Caco-2 (cell line): ENCODE measurements at regions of chr3 and their contacts with region 1.

Region 1: GRCh38 chr3:183988216-183988790 is 29.4 kb downstream of the ABCC5 start:
- DNase-seq: peak; percentile 77
- H3K4me3 ChIP-seq: no peak overlapping the region
- H3K4me3 Mint-ChIP-seq: peak overlapping the region; percentile 52
- H3K27ac Mint-ChIP-seq: peak overlapping the region; percentile 72
- H3K4me1 ChIP-seq: peaks cover 40% of the 10 kb centered on the region
- H3K4me1 Mint-ChIP-seq: peaks cover 48% of the 10 kb centered on the region
- H3K27me3 ChIP-seq: no peaks in the 10 kb centered on the region
- H3K27me3 Mint-ChIP-seq: no peaks in the 10 kb centered on the region
- CTCF ChIP-seq: peak in 1 of 2 experiments; percentile 38

Region 2: DNA sequence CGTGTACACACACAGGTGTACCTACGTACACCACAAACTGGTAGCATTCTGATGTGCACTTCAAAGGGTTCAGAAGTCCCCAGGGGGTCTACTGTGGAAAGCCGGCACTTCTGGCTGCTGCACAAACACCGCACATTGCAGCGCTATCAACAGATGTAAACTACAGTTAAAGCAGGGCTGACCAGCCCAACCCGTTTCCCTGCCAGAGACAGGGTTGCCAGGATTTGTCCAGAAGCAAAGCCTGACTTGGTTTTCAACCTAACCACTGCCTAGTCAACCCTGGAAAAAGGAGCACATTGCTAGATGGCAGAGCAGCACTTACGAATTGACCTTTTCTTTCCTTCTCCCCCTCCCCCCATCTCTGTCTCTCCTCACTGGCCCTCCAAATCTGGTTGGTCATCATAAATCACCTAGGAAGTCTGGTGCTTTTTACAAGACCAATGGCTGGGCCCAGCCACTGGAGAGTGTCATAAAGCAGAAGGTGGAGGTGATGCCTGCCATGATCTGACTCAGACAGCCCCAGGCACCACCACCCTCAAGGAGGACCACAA is 22.0 kb before region 1 on chr3:
- CTCF ChIA-PET with region 1: interaction called, 4 read pairs
- POLR2A ChIA-PET with region 1: no interaction called
- intact Hi-C with region 1: loop called (anchors 1 kb)
- DNase-seq: peak; percentile 68
- H3K4me3 ChIP-seq: no peak overlapping the region
- H3K4me3 Mint-ChIP-seq: peak overlapping the region; percentile 42
- H3K27ac Mint-ChIP-seq: peak overlapping the region; percentile 76
- H3K4me1 ChIP-seq: peaks cover 46% of the 10 kb centered on the region
- H3K4me1 Mint-ChIP-seq: peaks cover 31% of the 10 kb centered on the region
- H3K27me3 ChIP-seq: no peaks in the 10 kb centered on the region
- H3K27me3 Mint-ChIP-seq: no peaks in the 10 kb centered on the region
- CTCF ChIP-seq: no peak

Region 3: DNA sequence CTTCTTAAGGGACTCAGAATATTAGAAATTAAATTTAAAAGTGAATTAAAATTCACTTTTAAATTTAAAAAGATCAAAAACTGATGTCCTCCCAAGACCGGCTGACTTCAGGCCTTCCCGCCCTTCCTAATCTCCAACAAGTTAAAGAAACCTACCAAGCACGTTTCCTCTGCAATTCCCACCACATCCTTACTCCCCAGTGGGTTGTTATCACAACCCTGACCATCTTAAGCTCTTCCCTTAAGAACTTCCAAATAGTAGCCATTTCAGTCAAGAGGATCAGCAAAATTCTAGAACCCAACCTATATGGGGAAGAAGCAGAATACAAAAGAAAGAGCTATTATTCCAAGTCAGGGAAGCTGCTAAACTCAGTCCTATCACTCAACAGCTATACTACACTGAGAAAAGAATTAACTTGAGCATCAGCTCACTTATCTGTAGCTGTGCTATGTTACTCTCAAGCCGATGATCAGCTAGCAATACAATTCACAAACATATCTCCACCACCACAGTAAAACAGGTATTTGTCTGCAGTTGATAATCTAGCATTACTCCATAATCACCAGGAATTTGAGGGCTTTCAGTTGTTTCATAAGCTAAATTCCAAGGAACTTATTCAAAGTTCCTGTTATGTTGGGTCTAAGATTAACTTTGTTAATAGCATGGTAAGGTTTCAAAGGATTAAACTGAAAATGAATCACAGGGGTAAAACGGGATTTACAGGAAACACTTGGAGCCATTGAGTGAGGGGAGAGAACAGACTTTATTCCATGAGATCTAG is 15.1 kb after region 1 on chr3:
- CTCF ChIA-PET with region 1: no interaction called
- POLR2A ChIA-PET with region 1: interaction called, 3 read pairs
- intact Hi-C with region 1: loop called (anchors 1 kb)
- DNase-seq: no peak
- H3K4me3 ChIP-seq: no peak overlapping the region
- H3K4me3 Mint-ChIP-seq: no peak overlapping the region
- H3K27ac Mint-ChIP-seq: peak overlapping the region; percentile 56
- H3K4me1 ChIP-seq: peaks cover 9% of the 10 kb centered on the region; the same call in 1 of the 2 replicates
- H3K4me1 Mint-ChIP-seq: peaks cover 25% of the 10 kb centered on the region
- H3K27me3 ChIP-seq: no peaks in the 10 kb centered on the region
- H3K27me3 Mint-ChIP-seq: no peaks in the 10 kb centered on the region
- CTCF ChIP-seq: no peak